ENCODE measurements at regions of chr3 and their contacts with region 1.

Region 1: GRCh38 chr3:66472313-66473134 is 28.3 kb downstream of the LRIG1 start:
- DNase-seq: peak; percentile 77
- H3K4me3 Mint-ChIP-seq: peak overlapping the region; percentile 64
- H3K27ac Mint-ChIP-seq: peak overlapping the region; percentile 93
- H3K4me1 Mint-ChIP-seq: peaks cover 67% of the 10 kb centered on the region
- H3K27me3 Mint-ChIP-seq: no peaks in the 10 kb centered on the region

Region 2: GRCh38 chr3:64954995-64955636 is 1517.4 kb before region 1 on chr3:
- CTCF ChIA-PET with region 1: no interaction called
- POLR2A ChIA-PET with region 1: no interaction called
- intact Hi-C with region 1: no loop called
- DNase-seq: no peak
- H3K4me3 Mint-ChIP-seq: no peak overlapping the region
- H3K27ac Mint-ChIP-seq: no peak overlapping the region
- H3K4me1 Mint-ChIP-seq: no peaks in the 10 kb centered on the region
- H3K27me3 Mint-ChIP-seq: no peaks in the 10 kb centered on the region

Region 3: GRCh38 chr3:66220602-66221377 is 251.7 kb before region 1 on chr3 and contains the start of gene SLC25A26:
- CTCF ChIA-PET with region 1: no interaction called
- POLR2A ChIA-PET with region 1: no interaction called
- intact Hi-C with region 1: loop called (anchors 5 kb)
- DNase-seq: peak; percentile 98
- H3K4me3 Mint-ChIP-seq: peak within 1 kb of the TSS; percentile 90
- H3K27ac Mint-ChIP-seq: peak within 1 kb of the TSS; percentile 87
- H3K4me1 Mint-ChIP-seq: peaks cover 50% of the 10 kb centered on the region
- H3K27me3 Mint-ChIP-seq: no peaks in the 10 kb centered on the region
- total RNA-seq, gene SLC25A26: 22.6 TPM

Region 4: GRCh38 chr3:66302288-66302687 is 170.2 kb before region 1 on chr3:
- CTCF ChIA-PET with region 1: interaction called, 4 read pairs
- POLR2A ChIA-PET with region 1: interaction called, 7 read pairs
- intact Hi-C with region 1: loop called (anchors 1 kb)
- DNase-seq: peak; percentile 62
- H3K4me3 Mint-ChIP-seq: peak overlapping the region; percentile 23
- H3K27ac Mint-ChIP-seq: peak overlapping the region; percentile 98
- H3K4me1 Mint-ChIP-seq: peaks cover 72% of the 10 kb centered on the region
- H3K27me3 Mint-ChIP-seq: no peaks in the 10 kb centered on the region

Region 5: GRCh38 chr3:66423791-66424190 is 48.7 kb before region 1 on chr3:
- CTCF ChIA-PET with region 1: no interaction called
- POLR2A ChIA-PET with region 1: no interaction called
- intact Hi-C with region 1: loop called (anchors 2 kb)
- DNase-seq: peak; percentile 43
- H3K4me3 Mint-ChIP-seq: no peak overlapping the region
- H3K27ac Mint-ChIP-seq: peak overlapping the region; percentile 66
- H3K4me1 Mint-ChIP-seq: peaks cover 53% of the 10 kb centered on the region
- H3K27me3 Mint-ChIP-seq: no peaks in the 10 kb centered on the region

Region 6: GRCh38 chr3:66490214-66490613 is 17.7 kb after region 1 on chr3:
- CTCF ChIA-PET with region 1: interaction called, 4 read pairs
- POLR2A ChIA-PET with region 1: interaction called, 19 read pairs
- intact Hi-C with region 1: loop called (anchors 1 kb)
- DNase-seq: peak; percentile 54
- H3K4me3 Mint-ChIP-seq: peak overlapping the region; percentile 60
- H3K27ac Mint-ChIP-seq: peak overlapping the region; percentile 91
- H3K4me1 Mint-ChIP-seq: peaks cover 87% of the 10 kb centered on the region
- H3K27me3 Mint-ChIP-seq: no peaks in the 10 kb centered on the region